Endothelial cell of umbilical vein (primary cell): ENCODE measurements at regions of chr9 and their contacts with region 1.

Region 1: GRCh38 chr9:34546834-34547827 is 24.3 kb upstream of the ENHO start:
- DNase-seq: peak; percentile 66
- H3K4me3 ChIP-seq: no peak overlapping the region
- H3K27ac ChIP-seq: no peak overlapping the region
- H3K4me1 ChIP-seq: no peaks in the 10 kb centered on the region
- H3K27me3 ChIP-seq: peaks cover 5 to 7% of the 10 kb centered on the region in 2 experiments
- CTCF ChIP-seq: peak; percentile 73 to 85
- POLR2A ChIP-seq: no peak

Region 2: GRCh38 chr9:34328987-34329832 is 217.9 kb before region 1 on chr9 and contains the starts of genes KIF24 and NUDT2:
- CTCF ChIA-PET with region 1: interaction called, 10 read pairs
- POLR2A ChIA-PET with region 1: no interaction called
- dilution Hi-C with region 1: no loop called
- intact Hi-C with region 1: loop called (anchors 2 kb)
- DNase-seq: peak; percentile 100
- H3K4me3 ChIP-seq: peak within 1 kb of the TSS; percentile 75 to 89 (median 87)
- H3K27ac ChIP-seq: peak within 1 kb of the TSS; percentile 89
- H3K4me1 ChIP-seq: peaks cover 8% of the 10 kb centered on the region
- H3K27me3 ChIP-seq: no peaks in the 10 kb centered on the region
- CTCF ChIP-seq: no peak
- POLR2A ChIP-seq: peak; percentile 91
- total RNA-seq, gene KIF24: 4.5 and 4.8 TPM in 2 replicates
- total RNA-seq, gene NUDT2: 25.1 and 25.2 TPM in 2 replicates

Region 3: GRCh38 chr9:34437006-34437925 is 109.9 kb before region 1 on chr9:
- CTCF ChIA-PET with region 1: interaction called, 33 read pairs
- POLR2A ChIA-PET with region 1: no interaction called
- dilution Hi-C with region 1: no loop called
- intact Hi-C with region 1: loop called (anchors 1 kb)
- DNase-seq: peak; percentile 83
- H3K4me3 ChIP-seq: no peak overlapping the region
- H3K27ac ChIP-seq: no peak overlapping the region
- H3K4me1 ChIP-seq: peaks cover 18% of the 10 kb centered on the region
- H3K27me3 ChIP-seq: no peaks in the 10 kb centered on the region
- CTCF ChIP-seq: peak; percentile 75 to 77
- POLR2A ChIP-seq: no peak

Region 4: DNA sequence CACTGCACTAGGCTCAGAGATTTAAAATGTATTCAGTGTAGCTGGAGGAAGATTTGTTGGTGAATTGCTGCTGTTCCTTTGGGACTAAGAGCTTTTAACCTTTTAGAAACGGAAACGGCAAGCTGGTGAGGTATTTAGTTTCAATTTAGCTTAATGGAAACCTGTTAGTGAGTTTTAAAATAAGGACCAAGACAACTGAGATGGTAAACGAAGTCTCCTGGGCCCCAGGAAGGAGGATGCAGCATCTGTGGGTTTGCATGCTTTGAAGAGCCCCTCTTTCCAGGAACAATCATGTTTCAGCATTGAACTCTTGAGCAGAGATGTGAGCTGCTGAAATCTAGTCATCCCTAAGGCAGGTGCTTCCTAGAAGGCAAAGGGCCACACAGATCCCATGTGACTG is 72.0 kb before region 1 on chr9:
- CTCF ChIA-PET with region 1: no interaction called
- POLR2A ChIA-PET with region 1: no interaction called
- dilution Hi-C with region 1: no loop called
- intact Hi-C with region 1: no loop called
- DNase-seq: no peak
- H3K4me3 ChIP-seq: no peak overlapping the region
- H3K27ac ChIP-seq: no peak overlapping the region
- H3K4me1 ChIP-seq: no peaks in the 10 kb centered on the region
- H3K27me3 ChIP-seq: peaks cover 17 to 24% of the 10 kb centered on the region in 2 experiments
- CTCF ChIP-seq: no peak
- POLR2A ChIP-seq: no peak

Region 5: DNA sequence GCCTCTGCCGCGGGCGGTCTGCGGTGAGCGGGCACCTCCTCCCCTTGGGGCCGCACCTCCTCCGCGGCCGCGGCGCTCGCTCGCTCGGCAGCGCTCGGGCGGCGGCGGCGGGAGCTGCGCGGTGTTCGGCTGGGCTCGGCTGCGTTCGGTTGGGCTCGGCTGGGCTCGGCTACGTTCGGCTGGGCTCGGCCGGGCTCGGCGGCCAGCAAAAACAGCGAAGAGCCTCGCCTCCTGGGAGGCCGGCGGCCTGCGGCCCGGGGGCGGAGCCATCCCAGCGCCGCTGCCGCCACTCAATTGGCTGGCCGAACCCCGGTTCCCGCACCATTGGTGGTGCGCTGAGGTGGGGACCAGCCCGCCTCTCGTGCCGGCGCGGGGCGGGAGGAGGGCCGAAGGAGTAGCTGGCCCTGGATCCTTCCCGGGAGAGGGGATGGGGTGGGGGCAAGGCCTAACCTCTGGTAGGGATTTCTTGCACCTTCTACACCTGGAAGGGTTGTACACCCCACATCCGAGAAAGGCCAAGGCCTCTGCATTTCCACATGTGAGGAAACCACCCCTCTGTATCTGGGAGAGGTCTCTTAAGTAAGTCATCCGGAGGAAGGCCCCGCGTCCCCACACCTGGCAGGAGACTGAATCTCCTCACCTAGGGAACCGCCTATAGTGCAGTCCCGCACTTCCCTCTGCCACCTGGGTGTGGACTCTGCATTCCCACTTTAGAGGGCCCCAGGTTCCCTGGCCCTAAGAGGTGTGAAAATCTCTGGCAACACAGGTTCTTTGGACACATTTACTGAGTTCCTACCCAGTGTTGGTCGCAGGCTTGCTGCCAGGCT is 23.9 kb before region 1 on chr9 and contains the start of gene ENHO:
- CTCF ChIA-PET with region 1: interaction called, 12 read pairs
- POLR2A ChIA-PET with region 1: no interaction called
- dilution Hi-C with region 1: no loop called
- intact Hi-C with region 1: no loop called
- DNase-seq: peak; percentile 94
- H3K4me3 ChIP-seq: peak within 1 kb of the TSS in 2 of 3 experiments; percentile 14 to 32
- H3K27ac ChIP-seq: no peak within 1 kb of the TSS
- H3K4me1 ChIP-seq: peaks cover 3% of the 10 kb centered on the region
- H3K27me3 ChIP-seq: peaks cover 8 to 25% of the 10 kb centered on the region in 2 experiments
- CTCF ChIP-seq: no peak
- POLR2A ChIP-seq: no peak
- total RNA-seq, gene ENHO: not detected in 2 replicates

Region 6: DNA sequence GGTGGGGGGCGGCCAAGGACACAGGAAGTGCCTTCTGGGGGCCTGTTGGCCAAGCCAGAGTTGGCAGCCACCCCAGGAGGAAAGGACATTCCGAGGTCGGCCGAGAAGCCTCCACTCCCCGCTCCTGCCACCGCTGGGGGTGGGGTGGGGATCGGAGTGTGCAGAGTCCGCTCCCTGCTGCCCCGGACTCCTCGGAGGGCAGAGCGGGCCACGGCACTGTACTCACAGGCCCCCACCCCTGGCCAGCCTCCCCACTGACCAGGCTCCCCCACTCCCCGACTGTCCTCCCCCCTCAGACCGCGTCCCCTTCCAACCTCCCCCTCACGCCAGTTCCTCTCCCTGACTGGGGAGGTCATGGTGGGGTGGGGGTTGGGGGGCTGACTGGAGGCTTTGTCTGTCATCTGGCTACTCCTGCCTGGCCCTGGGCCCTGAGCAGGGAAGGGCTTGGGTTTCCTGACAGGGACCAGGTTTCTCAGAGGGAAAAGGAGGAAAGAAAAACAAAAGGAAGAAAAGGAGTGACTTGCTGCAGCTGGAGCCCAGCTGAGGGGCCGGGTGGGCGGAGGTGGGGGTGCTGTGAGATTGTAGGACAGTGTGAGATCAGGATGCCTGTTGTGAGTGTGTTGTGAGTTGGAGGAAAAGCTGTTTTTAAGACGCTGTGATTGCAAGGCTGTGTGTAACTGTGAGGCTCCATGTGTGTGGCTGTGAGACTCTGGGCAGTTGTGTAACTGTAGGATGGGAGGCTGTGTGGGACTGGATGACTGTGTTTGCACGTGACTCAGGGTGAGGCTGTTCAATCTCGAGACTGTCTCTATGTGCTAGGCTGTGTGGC is 12.7 kb after region 1 on chr9:
- CTCF ChIA-PET with region 1: interaction called, 10 read pairs
- POLR2A ChIA-PET with region 1: no interaction called
- dilution Hi-C with region 1: no loop called
- intact Hi-C with region 1: no loop called
- DNase-seq: peak; percentile 21
- H3K4me3 ChIP-seq: no peak overlapping the region
- H3K27ac ChIP-seq: no peak overlapping the region
- H3K4me1 ChIP-seq: no peaks in the 10 kb centered on the region
- H3K27me3 ChIP-seq: peaks cover 15 to 29% of the 10 kb centered on the region in 2 experiments
- CTCF ChIP-seq: no peak
- POLR2A ChIP-seq: no peak

Region 7: DNA sequence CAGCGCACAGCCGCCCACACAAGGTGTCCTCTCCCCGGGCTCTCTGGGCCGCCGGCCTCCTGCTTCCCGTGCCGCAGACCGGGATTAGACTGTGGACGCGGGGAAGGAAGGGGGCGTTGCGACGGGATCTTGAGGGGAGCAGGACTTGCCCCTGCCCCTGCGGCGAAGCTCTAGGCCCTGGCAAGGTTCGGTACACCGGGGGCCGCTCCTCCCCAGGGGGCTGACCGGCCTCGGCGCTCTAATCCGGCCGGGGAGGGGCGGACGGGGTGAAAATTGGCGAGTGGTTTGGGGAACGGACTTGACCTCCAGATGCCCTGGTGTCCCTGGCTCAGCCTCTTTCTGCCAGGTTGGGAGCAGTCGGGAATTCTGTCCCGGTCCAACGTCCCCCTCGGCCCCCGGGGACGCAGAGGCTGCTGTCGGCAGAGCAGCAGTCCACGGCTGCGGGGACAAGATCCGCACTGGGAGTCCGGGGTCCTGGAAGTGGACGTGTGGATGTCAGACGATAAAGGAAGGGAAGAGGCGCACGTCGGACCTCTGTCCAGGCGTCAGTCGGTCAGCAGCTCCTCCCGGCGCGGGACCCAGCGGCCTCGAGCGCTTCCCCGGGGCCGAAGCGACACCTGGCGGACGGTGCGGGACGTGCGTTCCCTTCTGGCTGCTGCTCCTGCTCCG is 44.3 kb after region 1 on chr9:
- CTCF ChIA-PET with region 1: interaction called, 326 read pairs
- POLR2A ChIA-PET with region 1: no interaction called
- dilution Hi-C with region 1: no loop called
- intact Hi-C with region 1: loop called (anchors 1 kb)
- DNase-seq: peak; percentile 70
- H3K4me3 ChIP-seq: no peak overlapping the region
- H3K27ac ChIP-seq: no peak overlapping the region
- H3K4me1 ChIP-seq: no peaks in the 10 kb centered on the region
- H3K27me3 ChIP-seq: peaks cover 66 to 75% of the 10 kb centered on the region in 2 experiments
- CTCF ChIP-seq: peak; percentile 88 to 99
- POLR2A ChIP-seq: no peak

Region 8: GRCh38 chr9:34637356-34638137 is 90.4 kb after region 1 on chr9 and contains the start of gene SIGMAR1:
- CTCF ChIA-PET with region 1: interaction called, 19 read pairs
- POLR2A ChIA-PET with region 1: no interaction called
- dilution Hi-C with region 1: no loop called
- intact Hi-C with region 1: loop called (anchors 1 kb)
- DNase-seq: peak; percentile 91
- H3K4me3 ChIP-seq: peak within 1 kb of the TSS; percentile 10 to 63 (median 47)
- H3K27ac ChIP-seq: peak within 1 kb of the TSS; percentile 33
- H3K4me1 ChIP-seq: peaks cover 16% of the 10 kb centered on the region
- H3K27me3 ChIP-seq: no peaks in the 10 kb centered on the region
- CTCF ChIP-seq: no peak
- POLR2A ChIP-seq: peak; percentile 81
- total RNA-seq, gene SIGMAR1: 74.1 and 81.2 TPM in 2 replicates